A549 (cell line): ENCODE measurements at regions of chr12 and their contacts with region 1.

Region 1: GRCh38 chr12:123232807-123233543 is at the starts of genes MPHOSPH9 and MTRFR:
- DNase-seq: peak; percentile 99 to 100
- ATAC-seq: peak; percentile 96 to 97
- H3K4me3 ChIP-seq: peak within 1 kb of the TSS; percentile 84
- H3K27ac ChIP-seq: peak within 1 kb of the TSS; percentile 93 to 97
- H3K4me1 ChIP-seq: peaks cover 38% of the 10 kb centered on the region
- CTCF ChIP-seq: no peak
- EP300 ChIP-seq: no peak
- POLR2A ChIP-seq: peak; percentile 99
- RAD21 ChIP-seq: 0 out of 5 replicates have a peak, but pooled peaks of 1 of the 2 experiments have one; percentile 20
- polyA plus RNA-seq, gene MPHOSPH9: 52.0 and 74.9 TPM in 2 replicates
- polyA plus RNA-seq, gene MTRFR: 15.5 and 16.0 TPM in 2 replicates

Region 2: DNA sequence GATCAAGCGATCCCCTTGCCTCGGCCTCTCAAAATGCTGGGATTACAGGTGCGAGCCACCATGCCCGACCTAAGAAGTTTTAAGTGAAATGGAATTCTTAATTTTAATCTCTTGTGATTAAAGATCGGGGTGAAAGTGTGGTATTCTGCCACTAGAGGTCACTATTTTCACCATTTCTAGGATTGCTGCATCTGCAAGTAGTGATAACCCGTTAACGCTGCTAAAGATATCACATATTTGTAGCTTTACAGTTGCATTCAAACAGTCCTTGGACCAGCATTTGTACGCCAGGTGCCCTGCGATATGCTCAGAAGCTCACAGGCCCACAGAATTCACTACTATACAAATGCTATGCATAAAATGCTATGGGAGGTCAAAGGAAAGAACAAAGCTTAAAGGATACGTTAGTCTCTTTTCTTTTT is 439.3 kb before region 1 on chr12:
- CTCF ChIA-PET with region 1: interaction called, 11 read pairs
- POLR2A ChIA-PET with region 1: interaction called, 6 read pairs
- DNase-seq: peak; percentile 63 to 73
- ATAC-seq: peak; percentile 89 to 90
- H3K4me3 ChIP-seq: no peak overlapping the region
- H3K27ac ChIP-seq: no peak overlapping the region
- H3K4me1 ChIP-seq: no peaks in the 10 kb centered on the region
- CTCF ChIP-seq: peak; percentile 86
- EP300 ChIP-seq: no peak
- POLR2A ChIP-seq: no peak
- RAD21 ChIP-seq: peak; percentile 80 to 86

Region 3: DNA sequence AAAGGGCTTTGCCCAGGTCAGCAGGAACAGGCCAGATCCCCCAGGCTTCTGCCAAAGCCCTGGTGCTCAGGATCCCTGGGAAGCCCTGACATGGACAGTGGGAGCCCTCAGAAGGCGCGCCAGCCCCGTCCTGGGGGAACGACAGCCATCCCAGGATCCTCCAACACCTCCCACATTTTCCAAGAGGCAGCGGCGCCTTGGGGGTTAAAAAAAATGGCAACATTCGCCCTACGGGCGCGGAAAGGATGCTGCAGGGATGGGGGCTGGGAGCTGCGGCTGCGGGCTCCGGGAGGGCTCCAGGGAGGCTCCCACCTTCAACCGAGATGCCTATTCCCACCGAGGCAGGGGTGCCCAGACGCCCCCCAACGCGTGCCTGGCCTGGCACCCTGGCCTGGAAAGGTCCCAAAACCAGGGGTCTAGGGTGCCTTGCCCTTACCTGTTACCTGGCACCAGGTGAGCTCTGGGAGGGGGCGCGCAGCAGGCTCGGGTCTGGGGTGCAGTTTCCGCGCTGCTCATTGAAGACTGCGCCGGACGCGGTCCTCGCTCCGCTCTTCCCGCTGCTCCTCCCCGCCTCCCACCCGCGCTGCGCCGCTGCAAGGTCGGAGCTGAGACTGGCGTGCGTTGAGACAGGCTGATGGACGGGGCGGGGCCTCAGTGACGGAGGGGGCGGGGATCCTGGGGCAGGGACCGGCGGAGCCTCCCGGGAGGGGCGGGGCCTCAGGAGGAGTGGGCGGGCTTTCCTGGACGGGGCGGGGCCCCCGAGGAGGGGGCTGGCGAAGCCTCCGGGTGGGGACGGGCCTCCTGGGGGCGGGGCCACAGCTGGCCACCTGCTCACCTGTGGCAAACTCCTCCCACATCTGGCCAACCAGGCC is 266.9 kb before region 1 on chr12 and contains the start of gene ABCB9:
- CTCF ChIA-PET with region 1: interaction called, 4 read pairs
- POLR2A ChIA-PET with region 1: interaction called, 14 read pairs
- DNase-seq: peak; percentile 90 to 93
- ATAC-seq: peak; percentile 88 to 96
- H3K4me3 ChIP-seq: peak within 1 kb of the TSS; percentile 77
- H3K27ac ChIP-seq: peak within 1 kb of the TSS; percentile 75 to 83
- H3K4me1 ChIP-seq: peaks cover 21% of the 10 kb centered on the region
- CTCF ChIP-seq: no peak
- EP300 ChIP-seq: no peak
- POLR2A ChIP-seq: peak; percentile 85
- RAD21 ChIP-seq: no peak
- polyA plus RNA-seq, gene ABCB9: 2.7 and 3.1 TPM in 2 replicates

Region 4: GRCh38 chr12:122995503-122996187 is 237.3 kb before region 1 on chr12:
- CTCF ChIA-PET with region 1: interaction called, 37 read pairs
- POLR2A ChIA-PET with region 1: interaction called, 3 read pairs
- DNase-seq: no peak
- ATAC-seq: no peak
- H3K4me3 ChIP-seq: no peak overlapping the region
- H3K27ac ChIP-seq: no peak overlapping the region
- H3K4me1 ChIP-seq: no peaks in the 10 kb centered on the region
- CTCF ChIP-seq: no peak
- EP300 ChIP-seq: no peak
- POLR2A ChIP-seq: no peak
- RAD21 ChIP-seq: no peak

Region 5: DNA sequence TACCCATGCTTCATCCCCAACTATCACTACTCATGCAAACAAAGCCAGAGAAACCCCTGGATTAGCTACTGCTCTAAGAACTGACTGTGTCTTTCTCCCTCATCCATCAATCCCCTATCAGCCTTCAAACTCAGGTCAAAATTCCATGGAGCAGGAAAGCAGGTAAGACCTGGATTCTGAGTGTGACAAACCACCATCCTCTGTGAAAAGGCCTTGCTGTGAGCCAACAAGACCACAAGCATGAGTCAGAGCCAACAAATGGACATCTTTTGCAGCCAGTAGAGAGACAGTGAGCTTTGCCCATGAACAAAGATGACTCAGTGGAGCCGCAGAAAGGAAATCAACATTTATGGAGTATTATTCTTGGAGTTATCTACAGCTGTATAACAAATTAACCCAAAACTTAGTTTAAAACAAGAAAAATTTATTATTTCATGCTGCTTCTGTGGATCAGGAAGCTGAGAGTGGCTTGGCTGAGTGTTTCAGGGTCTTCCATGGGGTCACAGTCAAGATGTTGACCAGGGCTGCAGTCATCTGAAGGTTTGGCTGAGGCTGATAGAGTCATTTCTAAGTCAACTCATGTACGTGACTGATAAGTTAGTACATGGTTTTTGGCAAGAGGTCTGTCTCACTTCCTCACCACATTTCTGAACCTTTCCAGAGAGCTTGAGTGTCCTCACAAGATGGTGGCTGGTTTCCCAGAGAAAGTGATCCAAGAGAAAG is 143.2 kb before region 1 on chr12:
- CTCF ChIA-PET with region 1: interaction called, 4 read pairs
- POLR2A ChIA-PET with region 1: interaction called, 10 read pairs
- DNase-seq: peak; percentile 85 to 88
- ATAC-seq: peak; percentile 48 to 69; a peak in 5 of 6 replicates
- H3K4me3 ChIP-seq: no peak overlapping the region
- H3K27ac ChIP-seq: peak overlapping the region; percentile 70 to 89
- H3K4me1 ChIP-seq: peaks cover 90% of the 10 kb centered on the region
- CTCF ChIP-seq: no peak
- EP300 ChIP-seq: peak in 1 of 2 experiments; percentile 35; a peak in 1 of 5 replicates
- POLR2A ChIP-seq: no peak
- RAD21 ChIP-seq: no peak

Region 6: GRCh38 chr12:123150744-123151456 is 82.1 kb before region 1 on chr12 and contains the start of gene PITPNM2:
- CTCF ChIA-PET with region 1: interaction called, 4 read pairs
- POLR2A ChIA-PET with region 1: interaction called, 13 read pairs
- DNase-seq: peak; percentile 57
- ATAC-seq: peak; percentile 77 to 86
- H3K4me3 ChIP-seq: peak within 1 kb of the TSS; percentile 80
- H3K27ac ChIP-seq: peak within 1 kb of the TSS; percentile 93 to 99
- H3K4me1 ChIP-seq: peaks cover 34% of the 10 kb centered on the region
- CTCF ChIP-seq: peak; percentile 49; the same call in 2 of the 3 replicates
- EP300 ChIP-seq: no peak
- POLR2A ChIP-seq: peak; percentile 25; the same call in 1 of the 2 replicates
- RAD21 ChIP-seq: 0 out of 5 replicates have a peak, but pooled peaks of 1 of the 2 experiments have one; percentile 23
- polyA plus RNA-seq, gene PITPNM2: 2.6 and 4.3 TPM in 2 replicates

Region 7: DNA sequence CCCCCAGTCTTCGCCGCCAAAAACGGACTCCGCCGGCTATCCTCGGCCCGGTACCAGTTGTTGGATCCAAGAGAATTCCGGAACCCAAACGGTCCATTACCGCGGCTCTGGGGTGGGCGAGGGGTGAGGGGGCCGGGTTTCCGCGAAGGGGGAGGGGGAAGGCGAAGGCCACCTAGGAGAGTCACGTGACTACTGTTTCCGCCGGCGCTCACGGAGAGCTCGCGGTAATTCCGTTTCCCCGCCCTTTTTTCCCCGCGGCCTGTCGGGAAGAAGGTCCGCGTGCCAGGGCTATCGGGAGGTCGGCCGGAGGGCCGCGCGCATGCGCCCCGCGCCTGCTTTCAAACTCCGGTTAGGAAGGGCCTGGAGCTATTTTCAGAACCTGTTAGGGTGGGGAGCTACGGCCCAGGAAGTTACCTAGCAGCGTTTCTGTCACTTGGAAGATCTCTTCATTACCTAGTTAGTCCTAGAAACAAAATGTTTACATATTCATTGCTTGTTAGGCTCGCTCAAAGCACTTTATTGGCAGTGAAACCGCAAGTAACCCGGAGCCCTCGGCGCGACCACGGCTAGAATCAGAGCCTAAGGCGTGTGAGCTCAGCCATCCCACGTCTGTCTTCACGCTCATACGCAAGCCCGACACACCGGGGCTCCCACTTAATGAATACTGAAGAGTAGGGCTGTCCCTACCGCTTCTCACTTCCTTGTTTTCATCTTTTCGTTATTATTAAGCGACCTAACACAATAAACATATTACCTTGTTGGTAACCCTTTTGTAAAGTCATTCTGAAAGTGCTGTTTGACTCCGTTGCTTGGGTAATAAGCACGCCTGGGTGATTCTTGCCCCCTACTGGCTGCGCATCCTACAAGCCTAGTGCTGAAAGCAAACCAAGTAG is 132.3 kb after region 1 on chr12:
- CTCF ChIA-PET with region 1: no interaction called
- POLR2A ChIA-PET with region 1: interaction called, 19 read pairs
- DNase-seq: peak; percentile 99 to 100
- ATAC-seq: peak; percentile 84 to 86
- H3K4me3 ChIP-seq: peak overlapping the region; percentile 96
- H3K27ac ChIP-seq: peak overlapping the region; percentile 93 to 98
- H3K4me1 ChIP-seq: peaks cover 14% of the 10 kb centered on the region
- CTCF ChIP-seq: peak; percentile 84
- EP300 ChIP-seq: no peak
- POLR2A ChIP-seq: peak; percentile 56
- RAD21 ChIP-seq: peak; percentile 63 to 67; a peak in 4 of 5 replicates